Activated T-helper 2 cell treated with anti-CD3 and anti-CD28 coated beads, Interferon-gamma antibody, Interleukin-2, Interleukin-4, amounts not matched to agents 10 μg/mL and 5 μg/mL and 100 μg/mL, durations not matched to agents 14 hours and 24 hours and 36 hours (primary cell): ENCODE measurements at regions of chr7 and their contacts with region 1.

Region 1: DNA sequence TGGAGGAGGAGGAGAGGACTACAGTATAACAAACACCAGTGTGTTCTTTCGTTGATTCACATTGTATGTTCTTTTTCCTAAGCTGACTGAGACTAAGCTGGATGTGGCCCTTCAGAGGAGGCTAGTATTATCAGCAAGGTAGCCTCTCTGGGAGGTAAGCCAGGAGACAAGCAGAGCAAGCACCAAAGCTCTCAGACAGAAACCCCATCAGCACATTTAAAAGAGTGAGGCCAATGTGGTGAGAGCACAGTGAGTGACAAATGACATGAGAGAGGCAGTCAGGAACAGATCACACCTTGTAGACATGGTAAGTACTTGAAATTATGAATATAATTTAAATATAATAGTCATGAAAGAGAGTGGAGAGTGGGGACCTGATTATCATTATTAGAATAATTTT is 107.6 kb downstream of the KMT2C start:
- DNase-seq: no peak
- H3K4me3 Mint-ChIP-seq: no peak overlapping the region
- H3K27ac Mint-ChIP-seq: no peak overlapping the region
- H3K4me1 Mint-ChIP-seq: peaks cover under 1% of the 10 kb centered on the region
- H3K27me3 Mint-ChIP-seq: no peaks in the 10 kb centered on the region

Region 2: DNA sequence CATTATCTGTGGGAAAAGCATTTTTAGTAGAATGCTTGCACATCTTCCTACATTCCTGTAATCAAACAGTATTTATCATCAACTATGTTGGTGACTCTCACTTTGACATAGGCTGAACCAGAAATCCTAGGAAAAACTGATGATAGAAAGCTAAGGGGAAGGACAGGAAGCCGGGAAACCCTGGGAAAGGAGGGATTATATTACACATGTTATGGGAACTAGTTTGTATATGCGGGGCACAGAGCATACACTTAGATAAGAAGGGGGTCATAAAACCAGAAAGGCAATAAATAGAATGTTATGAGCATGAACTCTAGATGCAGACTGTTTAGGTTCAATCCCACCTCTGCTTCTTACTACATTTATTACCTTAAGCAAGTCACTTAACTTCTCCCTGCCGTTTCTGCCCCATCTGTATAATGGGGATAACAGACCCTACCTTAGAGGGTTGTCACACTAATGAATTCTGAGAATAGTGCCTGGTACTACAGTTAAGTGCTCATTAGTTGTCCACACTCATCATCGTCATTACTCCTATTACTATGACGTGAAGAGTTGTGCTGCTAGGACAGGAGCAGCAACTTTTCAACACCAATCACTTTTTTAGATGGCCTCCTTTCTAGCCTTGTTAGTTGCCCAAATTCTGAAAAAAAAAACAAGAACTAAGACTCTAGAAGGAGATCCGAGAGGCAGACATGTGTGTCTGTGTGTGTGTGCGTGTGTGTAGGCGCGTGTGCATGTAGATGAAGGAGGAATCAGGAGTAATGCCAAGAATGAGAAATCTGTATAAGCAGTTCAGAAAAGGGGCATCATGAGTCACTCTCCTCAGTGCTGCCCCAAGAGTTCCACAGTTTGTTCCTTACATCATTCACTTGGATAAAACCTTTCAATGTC is 55.4 kb after region 1 on chr7:
- intact Hi-C with region 1: loop called (anchors 10 kb)
- DNase-seq: no peak
- H3K4me3 Mint-ChIP-seq: no peak overlapping the region
- H3K27ac Mint-ChIP-seq: no peak overlapping the region
- H3K4me1 Mint-ChIP-seq: peaks cover 6% of the 10 kb centered on the region
- H3K27me3 Mint-ChIP-seq: no peaks in the 10 kb centered on the region